GM23248 (cell line): ENCODE measurements at regions of chr14 and their contacts with region 1.

Region 1: GRCh38 chr14:75982266-75983018 is 647 bp upstream of the TGFB3 start:
- DNase-seq: peak; percentile 92
- H3K4me3 ChIP-seq: peak overlapping the region; percentile 94
- H3K27ac ChIP-seq: peak overlapping the region; percentile 77
- H3K4me1 ChIP-seq: peaks cover 35% of the 10 kb centered on the region
- H3K27me3 ChIP-seq: no peaks in the 10 kb centered on the region

Region 2: DNA sequence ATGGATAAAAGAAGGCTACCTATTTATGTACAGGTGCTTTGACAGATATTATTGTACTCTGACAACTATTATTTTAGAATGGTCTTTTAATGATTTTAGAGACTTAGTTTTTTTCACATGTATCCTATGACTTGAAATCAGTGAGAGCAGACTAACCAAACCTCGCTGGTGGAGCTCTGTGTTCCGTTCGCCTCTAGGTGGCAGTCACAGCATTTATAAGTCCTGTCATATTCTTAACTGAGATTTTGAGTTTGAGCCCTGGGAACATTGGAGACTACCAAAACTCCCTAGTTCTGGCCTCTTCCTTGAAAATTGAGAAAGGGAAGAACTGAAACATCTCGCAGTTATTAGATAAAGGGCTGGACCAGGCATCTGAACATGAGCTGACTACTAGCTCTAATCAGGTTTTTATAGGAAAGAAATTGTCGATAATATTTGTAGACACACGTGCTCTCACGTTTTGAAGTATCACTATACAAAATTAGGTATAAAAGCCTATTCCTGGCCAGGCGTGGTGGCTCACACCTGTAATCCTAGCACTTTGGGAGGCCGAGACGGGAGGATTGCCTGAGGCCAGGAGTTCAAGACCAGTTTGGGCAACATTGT is 273.1 kb before region 1 on chr14:
- in situ Hi-C with region 1: loop called (anchors 10 kb)
- DNase-seq: peak; percentile 90
- H3K4me3 ChIP-seq: no peak overlapping the region
- H3K27ac ChIP-seq: no peak overlapping the region
- H3K4me1 ChIP-seq: peaks cover 14% of the 10 kb centered on the region
- H3K27me3 ChIP-seq: no peaks in the 10 kb centered on the region

Region 3: GRCh38 chr14:76413962-76414625 is 431.7 kb after region 1 on chr14:
- in situ Hi-C with region 1: no loop called
- DNase-seq: no peak
- H3K4me3 ChIP-seq: no peak overlapping the region
- H3K27ac ChIP-seq: no peak overlapping the region
- H3K4me1 ChIP-seq: no peaks in the 10 kb centered on the region
- H3K27me3 ChIP-seq: peaks cover 28% of the 10 kb centered on the region